KBM-7 (cell line): ENCODE measurements at regions of chr1 and their contacts with region 1.

Region 1: GRCh38 chr1:9503001-9503675 is 36.1 kb upstream of the SLC25A33 start:
- DNase-seq: no peak

Region 2: GRCh38 chr1:8873506-8874229 is 629.5 kb before region 1 on chr1:
- in situ Hi-C with region 1: no loop called
- DNase-seq: peak; percentile 77

Region 3: DNA sequence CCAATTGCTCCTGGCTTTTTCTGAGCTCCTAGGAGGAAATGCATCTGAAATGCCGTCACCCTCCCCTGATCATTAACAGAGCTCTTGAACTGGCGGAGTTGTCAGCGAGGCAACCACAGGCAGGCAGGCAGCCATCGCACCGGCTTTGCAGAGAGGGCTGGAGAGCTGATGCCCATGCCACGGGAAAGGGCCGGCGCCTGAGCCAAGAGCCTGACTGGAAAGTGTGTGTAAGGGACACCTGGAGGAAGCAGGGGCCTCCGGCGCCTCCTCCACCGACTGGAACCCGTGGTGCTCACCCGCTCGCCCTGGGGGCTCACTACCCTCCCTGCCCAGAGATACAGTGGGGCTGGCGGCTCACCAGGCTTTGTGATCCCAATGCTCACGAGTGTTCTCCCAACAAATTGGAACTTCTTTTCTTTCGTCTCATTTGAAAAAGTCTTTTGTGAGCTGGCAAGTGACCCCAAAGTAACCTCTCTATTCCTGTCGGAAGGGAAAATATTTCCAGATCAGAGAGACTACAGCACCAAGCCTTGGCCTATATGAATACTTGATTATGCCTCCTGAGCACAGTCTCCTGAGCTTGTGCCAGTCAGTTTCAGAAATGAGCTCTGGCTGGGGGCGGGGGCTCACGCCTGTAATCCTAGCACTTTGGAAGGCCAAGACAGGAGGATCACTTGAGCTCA is 61.5 kb before region 1 on chr1:
- in situ Hi-C with region 1: loop called (anchors 10 kb)
- DNase-seq: no peak